Activated T-helper 1 cell treated with anti-CD3 and anti-CD28 coated beads, Interleukin-12 subunit alpha, Interleukin-12 subunit beta, Interleukin-2, Interleukin-4 antibody, amounts not matched to agents 30 ng/mL and 10 ng/mL and 1 ng/mL, durations not matched to agents 14 hours and 24 hours and 36 hours (primary cell): ENCODE measurements at regions of chr1 and their contacts with region 1.

Region 1: DNA sequence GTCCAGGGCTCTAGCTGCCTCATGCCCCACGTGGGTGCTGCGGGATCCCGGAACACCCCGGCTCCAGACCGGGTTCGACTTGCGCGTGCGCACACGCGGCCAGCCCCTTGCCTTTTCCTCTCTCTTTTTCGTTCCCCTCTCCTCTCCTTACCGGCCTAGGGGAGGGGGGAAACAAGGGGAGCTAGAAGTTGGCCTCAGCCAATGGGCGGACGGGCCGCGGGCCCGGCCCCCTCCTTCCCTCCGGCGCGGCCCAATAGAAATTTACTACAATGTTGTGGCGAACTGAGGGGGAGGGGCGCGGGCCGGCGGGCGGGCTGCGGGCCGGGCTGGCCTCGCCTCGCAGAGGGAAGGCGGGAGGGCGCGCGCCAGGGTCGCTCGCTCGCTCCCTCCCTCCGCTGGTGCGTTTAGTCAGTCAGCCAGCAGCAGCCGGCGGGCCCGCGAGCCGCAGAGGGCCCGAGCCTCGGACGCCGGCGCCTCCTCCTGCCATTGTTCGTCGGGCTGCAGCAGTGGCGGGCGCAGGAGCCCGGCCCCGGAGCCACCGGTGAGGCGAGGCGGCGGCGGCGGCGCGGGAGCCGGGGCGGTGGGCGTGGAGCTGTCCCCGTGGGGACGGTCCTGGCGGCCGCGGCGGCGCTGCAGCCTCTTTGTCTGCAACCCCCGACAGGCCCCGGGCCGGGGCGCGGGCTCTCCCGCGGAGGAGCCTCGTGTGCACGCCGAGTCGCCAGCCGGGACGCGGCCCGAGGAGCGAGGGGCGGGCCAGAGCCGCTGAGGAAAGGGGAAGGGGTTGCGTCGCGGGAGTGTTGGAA is at the start of gene EPB41:
- DNase-seq: peak; percentile 88
- H3K4me3 Mint-ChIP-seq: peak within 1 kb of the TSS; percentile 96
- H3K27ac Mint-ChIP-seq: peak within 1 kb of the TSS; percentile 92
- H3K4me1 Mint-ChIP-seq: peaks cover 51% of the 10 kb centered on the region
- H3K27me3 Mint-ChIP-seq: no peaks in the 10 kb centered on the region
- total RNA-seq, gene EPB41: 70.0 and 74.9 TPM in 2 replicates

Region 2: GRCh38 chr1:28926629-28927265 is 12.3 kb after region 1 on chr1:
- intact Hi-C with region 1: loop called (anchors 1 kb)
- DNase-seq: peak; percentile 57
- H3K4me3 Mint-ChIP-seq: peak overlapping the region; percentile 59
- H3K27ac Mint-ChIP-seq: peak overlapping the region; percentile 84
- H3K4me1 Mint-ChIP-seq: peaks cover 45% of the 10 kb centered on the region
- H3K27me3 Mint-ChIP-seq: no peaks in the 10 kb centered on the region

Region 3: GRCh38 chr1:28956038-28956464 is 41.6 kb after region 1 on chr1:
- intact Hi-C with region 1: no loop called
- DNase-seq: no peak
- H3K4me3 Mint-ChIP-seq: no peak overlapping the region
- H3K27ac Mint-ChIP-seq: no peak overlapping the region
- H3K4me1 Mint-ChIP-seq: peaks cover 5% of the 10 kb centered on the region
- H3K27me3 Mint-ChIP-seq: no peaks in the 10 kb centered on the region

Region 4: GRCh38 chr1:28971980-28972771 is 57.7 kb after region 1 on chr1:
- intact Hi-C with region 1: loop called (anchors 2 kb)
- DNase-seq: no peak
- H3K4me3 Mint-ChIP-seq: no peak overlapping the region
- H3K27ac Mint-ChIP-seq: no peak overlapping the region
- H3K4me1 Mint-ChIP-seq: peaks cover 22% of the 10 kb centered on the region
- H3K27me3 Mint-ChIP-seq: no peaks in the 10 kb centered on the region